ENCODE measurements at regions of chr12 and their contacts with region 1.

Region 1: GRCh38 chr12:79737875-79738718 is 47.3 kb upstream of the PAWR start:
- DNase-seq: peak; percentile 69 to 74
- H3K4me3 ChIP-seq: no peak overlapping the region
- H3K4me1 ChIP-seq: no peaks in the 10 kb centered on the region
- H3K27me3 ChIP-seq: no peaks in the 10 kb centered on the region

Region 2: GRCh38 chr12:79415746-79416435 is 322.2 kb before region 1 on chr12:
- in situ Hi-C with region 1: loop called (anchors 10 kb)
- DNase-seq: peak in 1 of 2 experiments; percentile 13
- H3K4me3 ChIP-seq: no peak overlapping the region
- H3K4me1 ChIP-seq: peaks cover 13% of the 10 kb centered on the region
- H3K27me3 ChIP-seq: no peaks in the 10 kb centered on the region

Region 3: DNA sequence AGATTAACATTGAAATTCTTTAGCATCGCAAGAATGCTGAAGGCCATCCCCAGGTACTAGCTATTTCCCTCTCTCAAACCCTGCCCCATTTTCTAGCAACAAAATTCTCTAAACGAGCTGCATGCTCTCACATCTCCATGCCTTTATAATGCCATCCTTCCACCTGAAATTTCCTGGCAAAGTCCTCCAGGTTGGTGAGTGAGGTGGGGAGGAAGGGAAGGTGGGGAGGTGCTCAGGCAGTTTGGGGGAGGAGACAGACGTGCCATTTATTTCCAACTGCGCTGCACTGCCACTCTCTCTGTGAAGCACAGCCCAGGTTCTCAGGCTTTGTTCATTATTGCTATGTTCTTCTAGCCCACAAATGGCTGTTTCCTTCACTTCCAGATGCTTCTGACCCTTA is 255.8 kb before region 1 on chr12:
- in situ Hi-C with region 1: no loop called
- DNase-seq: no peak
- H3K4me3 ChIP-seq: no peak overlapping the region
- H3K4me1 ChIP-seq: no peaks in the 10 kb centered on the region
- H3K27me3 ChIP-seq: no peaks in the 10 kb centered on the region; the same call in 1 of the 2 replicates

Region 4: GRCh38 chr12:79555028-79555930 is 182.8 kb before region 1 on chr12:
- in situ Hi-C with region 1: loop called (anchors 10 kb)
- DNase-seq: peak in 1 of 2 experiments; percentile 39
- H3K4me3 ChIP-seq: no peak overlapping the region
- H3K4me1 ChIP-seq: peaks cover 3% of the 10 kb centered on the region
- H3K27me3 ChIP-seq: no peaks in the 10 kb centered on the region

Region 5: GRCh38 chr12:80837348-80837985 is 1099.4 kb after region 1 on chr12:
- in situ Hi-C with region 1: no loop called
- DNase-seq: peak; percentile 53 to 64
- H3K4me3 ChIP-seq: no peak overlapping the region
- H3K4me1 ChIP-seq: peaks cover 8% of the 10 kb centered on the region; the same call in 1 of the 2 replicates
- H3K27me3 ChIP-seq: no peaks in the 10 kb centered on the region

Measured in HAP-1 (cell line).